ENCODE measurements at regions of chr12 and their contacts with region 1.

Region 1: DNA sequence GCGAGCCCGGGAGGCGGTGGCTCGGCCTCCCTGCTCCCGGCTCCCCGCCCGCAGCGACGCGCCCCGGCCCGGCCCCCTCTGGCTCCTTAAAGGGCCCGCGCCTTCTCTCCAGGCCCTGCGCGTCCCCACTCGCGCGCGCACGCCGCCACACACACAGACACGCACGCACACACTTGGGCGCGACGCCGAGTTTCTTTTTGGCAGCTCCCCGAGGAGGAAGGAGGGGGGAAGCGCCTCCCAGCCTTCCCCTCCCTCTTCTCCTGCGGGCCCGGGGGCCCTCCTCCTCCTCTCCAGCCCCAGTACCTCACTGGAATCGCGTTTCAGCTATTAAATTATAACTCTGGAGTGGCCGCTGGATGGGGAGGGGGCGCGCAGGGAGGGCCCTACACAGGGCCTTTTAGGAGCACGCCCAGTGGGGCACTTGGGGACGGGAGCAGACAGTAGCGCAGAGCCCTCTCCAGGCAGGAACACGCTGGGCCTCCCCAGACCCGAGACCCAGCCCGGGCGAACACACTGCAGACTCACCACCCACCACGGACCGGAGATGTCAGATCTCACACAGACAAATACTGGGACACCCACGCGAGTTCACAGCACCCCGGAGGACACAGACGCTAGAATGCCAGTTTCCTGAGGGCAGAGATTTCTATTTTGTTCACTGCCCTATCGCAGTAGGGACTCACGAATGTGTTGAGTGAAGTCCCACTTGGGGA is 405 bp upstream of the NCOR2 start:
- DNase-seq: peak; percentile 81
- H3K4me3 ChIP-seq: peak overlapping the region; percentile 67
- H3K27ac ChIP-seq: peak overlapping the region; percentile 18
- H3K4me1 ChIP-seq: peaks cover 39% of the 10 kb centered on the region
- CTCF ChIP-seq: no peak

Region 2: DNA sequence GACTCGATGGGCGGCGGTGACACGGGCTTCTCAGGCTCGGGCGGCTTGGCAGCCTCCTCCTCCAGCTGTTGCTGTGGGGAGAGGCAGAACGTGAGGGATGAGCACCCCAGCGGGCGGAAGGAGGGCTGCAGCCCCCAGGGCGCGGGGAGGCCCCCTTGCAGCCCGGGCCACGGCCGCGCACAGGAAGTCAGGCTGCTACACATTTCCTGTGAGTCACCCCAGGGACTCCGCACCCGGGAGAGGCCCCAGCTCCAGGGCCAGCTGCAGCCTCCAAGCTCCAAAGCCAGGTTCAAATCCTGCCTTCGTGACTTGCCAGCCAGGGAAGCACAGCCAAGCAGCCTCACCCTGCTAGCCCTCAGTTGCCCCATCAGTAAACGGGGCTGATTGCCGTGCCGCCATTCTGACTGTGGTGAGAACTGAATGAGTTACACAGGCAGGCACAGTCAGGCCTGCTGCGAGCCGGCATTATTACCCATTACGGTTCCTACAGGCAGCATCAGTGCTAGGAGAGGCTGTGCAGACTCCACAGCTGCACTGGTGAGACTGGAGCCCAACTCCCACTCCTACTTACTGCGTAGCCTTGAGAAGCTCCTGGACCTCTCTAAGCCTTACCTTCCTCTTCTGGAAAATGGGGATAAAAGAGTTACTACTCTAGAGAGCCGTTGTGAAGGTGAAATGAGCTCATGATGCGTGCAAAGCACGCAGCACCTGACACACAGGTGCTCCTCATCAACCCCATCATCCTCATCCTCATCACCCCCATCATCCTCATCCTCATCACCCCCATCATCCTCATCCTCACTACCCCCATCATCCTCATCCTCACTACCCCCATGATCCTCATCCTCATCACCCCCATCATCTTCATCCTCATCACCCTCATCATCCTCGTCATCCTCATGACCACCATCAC is 101.3 kb before region 1 on chr12:
- CTCF ChIA-PET with region 1: no interaction called
- POLR2A ChIA-PET with region 1: no interaction called
- intact Hi-C with region 1: loop called (anchors 2 kb)
- DNase-seq: peak; percentile 89
- H3K4me3 ChIP-seq: peak overlapping the region; percentile 46
- H3K27ac ChIP-seq: peak overlapping the region; percentile 79
- H3K4me1 ChIP-seq: peaks cover 28% of the 10 kb centered on the region
- CTCF ChIP-seq: peak; percentile 56

Region 3: DNA sequence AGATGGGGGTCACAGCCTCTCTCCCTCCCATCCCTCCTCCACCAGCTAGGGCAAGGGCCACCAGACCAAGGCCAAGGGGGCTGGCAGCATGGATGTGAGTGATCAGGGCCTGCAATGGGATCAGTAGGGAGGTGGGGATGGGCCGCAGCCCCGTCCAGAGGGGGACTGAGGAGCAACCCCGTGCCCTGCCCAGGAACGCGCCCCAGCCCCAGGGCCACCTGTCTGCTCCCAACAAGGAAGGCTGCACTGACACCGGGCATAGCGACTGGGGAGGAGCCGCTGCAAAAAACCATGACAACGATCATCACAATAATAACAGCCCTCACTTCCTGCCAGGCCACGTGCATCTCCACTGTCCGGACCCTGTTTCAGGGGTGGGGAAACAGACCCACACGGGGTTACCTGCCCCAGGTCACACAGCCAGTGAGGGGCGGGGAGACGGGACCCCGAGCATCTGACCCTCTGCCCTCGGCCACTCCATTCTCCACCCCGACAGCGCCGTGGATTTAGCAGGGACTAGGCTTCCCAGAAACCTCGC is 24.7 kb before region 1 on chr12:
- CTCF ChIA-PET with region 1: no interaction called
- POLR2A ChIA-PET with region 1: interaction called, 3 read pairs
- intact Hi-C with region 1: loop called (anchors 2 kb)
- DNase-seq: peak; percentile 74
- H3K4me3 ChIP-seq: peak overlapping the region; percentile 49
- H3K27ac ChIP-seq: peak overlapping the region; percentile 52
- H3K4me1 ChIP-seq: peaks cover 36% of the 10 kb centered on the region
- CTCF ChIP-seq: no peak

Region 4: DNA sequence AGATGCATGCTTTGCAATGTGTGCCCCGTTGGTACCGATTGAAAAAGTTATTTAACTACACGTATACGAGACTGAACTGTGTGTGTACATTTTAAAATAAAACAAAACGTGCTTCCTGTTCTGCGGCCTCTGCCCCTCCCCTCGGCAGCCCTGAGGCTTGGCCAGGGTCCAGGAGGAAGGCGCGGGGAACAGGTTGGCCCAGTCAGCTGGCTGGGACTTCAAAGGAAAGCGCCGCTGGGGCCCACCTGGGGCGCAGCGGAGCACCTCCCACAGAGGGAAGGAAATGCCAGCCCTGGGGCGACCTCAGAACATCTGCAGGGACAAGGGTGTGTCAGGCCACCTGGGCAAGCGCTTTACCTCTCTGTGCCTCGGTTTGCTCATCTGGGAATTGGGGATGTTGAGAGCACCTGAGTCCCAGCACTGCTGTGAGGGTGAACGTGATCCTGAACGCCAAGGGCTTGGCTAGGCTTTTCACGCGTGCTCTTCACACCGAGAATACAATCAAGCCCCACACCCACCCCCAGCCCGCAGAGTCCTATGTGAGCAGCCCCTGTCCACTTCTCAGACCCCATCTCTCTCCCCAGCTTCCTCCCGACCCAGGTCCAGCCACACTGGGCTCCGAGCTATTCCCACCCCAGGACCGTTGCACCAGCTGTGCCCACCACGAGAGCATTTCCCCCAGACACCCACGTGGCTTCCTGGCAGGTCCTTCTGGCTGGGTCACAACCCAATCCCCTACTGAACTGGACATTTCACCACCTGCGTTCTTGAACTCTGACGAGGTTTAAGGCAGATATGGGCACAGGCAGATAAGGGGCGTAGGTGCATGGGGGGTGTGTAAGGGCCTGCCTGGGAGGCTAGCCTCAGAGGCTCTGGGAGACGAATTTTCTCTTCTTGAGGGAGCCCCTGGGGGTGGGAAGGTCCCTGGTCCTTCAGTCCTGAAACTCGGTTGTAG is 41.5 kb after region 1 on chr12:
- CTCF ChIA-PET with region 1: interaction called, 3 read pairs
- POLR2A ChIA-PET with region 1: interaction called, 3 read pairs
- intact Hi-C with region 1: loop called (anchors 1 kb)
- DNase-seq: peak; percentile 96
- H3K4me3 ChIP-seq: peak overlapping the region; percentile 48
- H3K27ac ChIP-seq: peak overlapping the region; percentile 89
- H3K4me1 ChIP-seq: peaks cover 39% of the 10 kb centered on the region
- CTCF ChIP-seq: peak; percentile 24; the same call in 1 of the 2 replicates

Region 5: DNA sequence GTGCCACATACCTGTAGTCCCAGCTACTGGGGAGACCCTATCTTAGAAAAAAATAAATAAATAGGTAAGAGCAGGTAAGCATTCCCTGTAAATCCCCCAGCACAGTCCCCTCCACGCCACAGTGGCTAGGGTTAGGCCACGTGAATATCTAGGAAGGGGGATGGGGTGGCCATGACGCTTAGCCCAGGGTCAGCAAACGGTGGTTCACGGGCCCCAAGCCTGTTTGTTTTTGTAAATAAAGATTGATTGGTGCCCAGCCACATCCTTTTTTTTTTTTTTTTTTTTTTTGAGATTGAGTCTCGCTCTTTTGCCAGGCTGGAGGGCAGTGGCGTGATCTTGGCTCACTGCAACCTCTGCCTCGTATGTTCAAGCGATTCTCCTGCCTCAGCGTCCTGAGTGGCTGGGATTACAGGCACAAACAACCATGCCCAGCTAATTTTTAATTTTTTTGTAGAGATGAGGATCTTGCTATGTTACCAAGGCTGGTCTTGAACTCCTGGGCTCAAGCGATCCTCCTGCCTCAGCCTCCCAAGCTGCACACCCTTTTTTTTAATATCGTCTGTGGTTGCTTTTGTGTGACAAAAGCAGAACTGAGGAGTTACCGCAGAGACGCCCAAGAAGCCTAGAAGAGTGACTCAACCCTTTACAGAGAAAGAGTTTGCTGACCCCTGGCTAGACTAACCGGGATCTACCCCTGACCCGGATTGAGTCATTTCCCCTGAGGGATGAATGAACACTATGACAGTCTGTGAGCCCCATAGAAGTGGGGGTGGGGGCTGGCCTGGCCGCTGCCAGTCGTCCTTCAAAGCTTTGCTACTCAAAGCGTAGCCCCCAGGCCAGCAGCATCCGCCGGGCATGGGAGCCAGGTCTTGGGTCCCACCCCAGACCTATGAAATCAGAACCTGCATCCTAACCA is 113.3 kb after region 1 on chr12:
- CTCF ChIA-PET with region 1: no interaction called
- POLR2A ChIA-PET with region 1: no interaction called
- intact Hi-C with region 1: loop called (anchors 5 kb)
- DNase-seq: peak; percentile 32
- H3K4me3 ChIP-seq: no peak overlapping the region
- H3K27ac ChIP-seq: no peak overlapping the region
- H3K4me1 ChIP-seq: no peaks in the 10 kb centered on the region
- CTCF ChIP-seq: peak; percentile 29; the same call in 1 of the 2 replicates

Region 6: DNA sequence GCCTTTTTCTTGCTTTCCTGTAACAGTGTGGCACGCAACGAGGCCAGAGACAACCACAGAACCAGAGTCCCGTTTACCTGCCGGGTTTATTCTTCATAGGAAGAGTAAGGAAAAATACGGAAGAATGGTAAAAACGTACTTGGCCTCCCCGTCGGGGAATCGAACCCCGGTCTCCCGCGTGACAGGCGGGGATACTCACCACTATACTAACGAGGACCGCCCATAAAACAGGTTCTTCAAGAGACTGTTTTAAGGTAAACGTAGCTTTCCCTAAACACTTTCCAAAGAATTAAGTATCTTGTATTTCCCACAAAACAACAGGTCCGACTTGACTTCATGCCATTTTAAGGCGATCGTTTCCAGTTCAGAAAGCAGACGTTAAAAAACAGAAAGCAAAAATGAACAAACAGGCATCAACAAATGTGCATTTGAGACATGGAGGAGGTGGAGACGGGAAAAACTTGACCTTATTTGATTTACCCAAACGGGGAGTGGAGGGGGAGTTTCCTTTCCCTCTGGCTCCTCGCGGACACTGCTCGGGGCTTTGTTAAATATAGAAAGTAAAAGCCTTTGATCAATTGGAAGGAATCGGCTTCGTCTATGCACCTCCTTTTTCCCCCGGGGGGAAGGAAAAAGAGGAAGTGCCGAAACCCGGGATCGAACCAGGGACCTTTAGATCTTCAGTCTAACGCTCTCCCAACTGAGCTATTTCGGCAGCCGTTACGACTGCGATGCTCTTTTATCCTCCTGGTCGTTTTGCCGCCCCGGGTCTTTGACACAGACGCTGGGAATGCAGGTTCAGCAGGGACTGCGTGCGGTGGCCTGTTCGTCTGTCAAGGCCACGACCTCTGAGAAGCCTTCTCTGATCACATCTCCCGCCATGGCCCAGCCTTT is 359.6 kb after region 1 on chr12:
- CTCF ChIA-PET with region 1: no interaction called
- POLR2A ChIA-PET with region 1: no interaction called
- intact Hi-C with region 1: no loop called
- DNase-seq: peak; percentile 85
- H3K4me3 ChIP-seq: peak overlapping the region; percentile 81
- H3K27ac ChIP-seq: peak overlapping the region; percentile 66
- H3K4me1 ChIP-seq: peaks cover 19% of the 10 kb centered on the region
- CTCF ChIP-seq: no peak

Measured in OCI-LY7 (cell line).